ENCODE measurements at regions of chr20 and their contacts with region 1.

Region 1: DNA sequence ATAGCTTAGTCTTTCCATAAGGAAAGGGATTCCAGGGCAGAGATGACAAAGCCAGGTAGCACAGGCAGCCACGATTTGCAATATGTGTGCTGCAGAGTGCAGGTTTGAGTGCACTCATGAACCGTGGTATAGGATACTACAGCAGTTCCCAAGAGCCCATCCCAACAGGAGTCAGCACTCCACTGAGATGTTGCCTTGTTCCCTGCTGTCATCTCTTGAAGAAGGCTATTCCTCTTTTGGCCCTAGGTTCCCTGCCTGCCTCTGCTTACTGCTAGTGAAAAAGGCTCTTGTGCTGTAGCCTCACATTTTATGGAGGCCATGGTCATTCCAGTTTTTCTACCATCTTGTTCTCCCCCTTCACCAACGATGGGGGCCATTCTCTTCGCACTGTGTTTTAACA is 40.2 kb downstream of the RALY start:
- DNase-seq: no peak
- ATAC-seq: no peak
- H3K4me3 ChIP-seq: no peak overlapping the region
- H3K27ac ChIP-seq: no peak overlapping the region
- H3K4me1 ChIP-seq: 0 out of 4 replicates have a peak, but pooled peaks cover 0 to 2% of the 10 kb centered on the region in 2 experiments
- H3K27me3 ChIP-seq: no peaks in the 10 kb centered on the region
- CTCF ChIP-seq: no peak
- POLR2A ChIP-seq: no peak
- RAD21 ChIP-seq: no peak

Region 2: DNA sequence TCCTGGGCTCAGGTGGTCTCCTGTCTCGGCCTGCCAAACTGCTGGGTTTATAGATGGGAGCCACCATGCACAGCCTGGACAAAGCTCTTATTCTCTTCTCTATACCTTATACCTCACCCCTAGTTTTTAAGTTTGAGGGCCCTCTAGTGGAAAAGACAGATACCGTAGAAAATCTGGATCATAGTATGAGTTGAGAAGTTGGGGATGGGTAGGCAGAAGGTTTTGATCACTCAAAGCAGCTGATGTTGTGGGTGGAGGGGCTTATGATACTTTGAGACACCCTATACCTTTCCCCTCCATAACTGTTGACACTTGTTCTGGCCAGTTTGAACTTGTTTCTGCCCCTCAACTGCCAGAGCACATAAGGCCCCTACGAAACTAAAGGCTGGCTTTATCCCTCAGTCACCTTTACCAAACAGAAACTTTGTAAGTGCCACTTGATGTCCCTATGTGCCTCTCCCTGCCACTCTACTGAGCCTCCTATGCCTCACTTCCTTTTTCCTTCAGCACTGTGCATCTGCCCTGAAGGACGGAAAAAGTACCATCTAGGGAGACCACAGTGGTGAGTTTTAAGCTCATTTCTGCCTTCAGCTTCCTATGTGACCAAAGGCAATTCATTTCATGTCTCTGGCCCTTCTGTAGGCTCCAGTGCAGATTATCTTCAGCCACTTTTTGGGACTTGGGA is 11.6 kb before region 1 on chr20:
- CTCF ChIA-PET with region 1: interaction called, 12 read pairs
- POLR2A ChIA-PET with region 1: no interaction called
- RAD21 ChIA-PET with region 1: no interaction called
- intact Hi-C with region 1: no loop called
- DNase-seq: peak; percentile 10
- ATAC-seq: peak; percentile 87
- H3K4me3 ChIP-seq: no peak overlapping the region
- H3K27ac ChIP-seq: no peak overlapping the region
- H3K4me1 ChIP-seq: peaks cover 7 to 14% of the 10 kb centered on the region in 2 experiments; a peak in 3 of 4 replicates
- H3K27me3 ChIP-seq: no peaks in the 10 kb centered on the region
- CTCF ChIP-seq: peak; percentile 49 to 60 (median 58); a peak in 4 of 6 replicates
- POLR2A ChIP-seq: no peak
- RAD21 ChIP-seq: peak; percentile 59

Measured in HCT116 (cell line).